GM12878 (cell line): ENCODE measurements at regions of chr1 and their contacts with region 1.

Region 1: DNA sequence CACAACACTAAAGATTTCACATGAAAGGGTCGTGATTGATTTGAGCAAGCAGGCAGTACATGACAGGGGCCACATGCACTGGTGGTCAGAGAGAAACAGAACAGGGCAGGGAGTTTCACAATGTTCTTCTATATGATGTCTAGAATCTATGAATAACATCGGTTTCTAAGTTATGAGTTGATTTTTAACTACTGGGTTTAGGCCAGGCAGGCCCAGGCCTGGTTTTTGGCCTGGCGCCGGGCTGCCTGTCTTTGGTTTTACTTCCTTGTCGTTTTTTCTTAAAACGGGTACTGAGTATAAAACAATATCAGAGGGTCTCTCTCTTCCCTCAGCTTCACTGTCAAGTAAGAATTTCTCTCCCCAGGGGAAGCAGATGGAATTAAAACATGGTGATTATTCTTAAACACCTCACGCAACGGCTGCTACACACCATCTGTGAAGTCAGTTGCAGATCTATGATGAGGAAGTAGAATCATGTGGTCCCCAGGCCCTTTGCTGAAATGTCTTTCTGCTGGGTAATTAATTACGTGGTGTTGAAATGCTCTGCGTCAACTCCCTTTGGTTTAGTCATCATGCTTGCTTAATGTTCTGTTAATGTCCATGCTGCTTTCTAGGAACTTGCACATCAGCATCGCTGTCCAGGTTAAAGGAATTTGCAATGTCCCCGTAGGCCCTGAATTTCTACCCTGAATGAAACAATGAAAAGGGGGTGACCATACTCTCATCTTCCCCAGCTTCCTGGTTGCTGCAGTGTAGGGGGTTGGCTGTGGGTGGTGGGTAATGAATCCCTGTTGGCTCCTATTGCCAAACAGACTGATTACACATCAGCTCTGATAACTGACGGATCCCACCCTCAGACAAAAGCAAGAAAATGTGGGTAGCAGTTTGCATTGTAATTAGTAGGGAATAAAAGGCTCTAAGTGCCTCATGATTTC is 70.3 kb downstream of the SERINC2 start:
- DNase-seq: peak; percentile 58
- ATAC-seq: peak; percentile 91
- H3K4me3 ChIP-seq: no peak overlapping the region
- H3K27ac ChIP-seq: peak overlapping the region; percentile 57
- H3K4me1 ChIP-seq: no peaks in the 10 kb centered on the region
- H3K27me3 ChIP-seq: no peaks in the 10 kb centered on the region
- CTCF ChIP-seq: no peak
- EP300 ChIP-seq: peak in 1 of 2 experiments; percentile 87; a peak in 3 of 4 replicates
- POLR2A ChIP-seq: no peak
- RAD21 ChIP-seq: no peak

Region 2: DNA sequence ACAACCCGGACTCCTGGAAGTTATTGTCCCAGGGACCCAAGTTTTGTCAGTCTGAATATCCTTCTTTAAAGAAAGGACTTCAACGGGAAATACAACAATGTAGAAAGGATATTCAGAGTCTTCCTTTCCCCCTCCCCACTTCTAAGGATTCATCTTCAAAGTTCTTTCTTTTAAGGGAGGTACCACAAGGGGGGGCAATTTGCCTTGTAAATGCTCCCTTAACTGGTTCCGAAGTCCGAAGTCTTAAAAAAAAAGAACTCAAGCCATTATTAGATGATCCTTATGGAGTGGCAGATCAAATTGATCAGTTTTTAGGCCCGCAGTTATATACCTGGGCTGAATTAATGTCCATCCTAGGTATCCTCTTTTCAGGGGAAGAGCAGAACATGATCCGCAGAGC is 23.3 kb before region 1 on chr1:
- CTCF ChIA-PET with region 1: no interaction called
- POLR2A ChIA-PET with region 1: no interaction called
- RAD21 ChIA-PET with region 1: interaction called, 28 read pairs
- SMC1A ChIA-PET with region 1: interaction called, 27 read pairs
- in situ Hi-C with region 1: no loop called
- intact Hi-C with region 1: no loop called
- DNase-seq: no peak
- ATAC-seq: no peak
- H3K4me3 ChIP-seq: no peak overlapping the region
- H3K27ac ChIP-seq: no peak overlapping the region
- H3K4me1 ChIP-seq: no peaks in the 10 kb centered on the region
- H3K27me3 ChIP-seq: no peaks in the 10 kb centered on the region
- CTCF ChIP-seq: peak in 1 of 3 experiments; percentile 7; a peak in 1 of 6 replicates
- EP300 ChIP-seq: no peak
- POLR2A ChIP-seq: no peak
- RAD21 ChIP-seq: no peak

Region 3: DNA sequence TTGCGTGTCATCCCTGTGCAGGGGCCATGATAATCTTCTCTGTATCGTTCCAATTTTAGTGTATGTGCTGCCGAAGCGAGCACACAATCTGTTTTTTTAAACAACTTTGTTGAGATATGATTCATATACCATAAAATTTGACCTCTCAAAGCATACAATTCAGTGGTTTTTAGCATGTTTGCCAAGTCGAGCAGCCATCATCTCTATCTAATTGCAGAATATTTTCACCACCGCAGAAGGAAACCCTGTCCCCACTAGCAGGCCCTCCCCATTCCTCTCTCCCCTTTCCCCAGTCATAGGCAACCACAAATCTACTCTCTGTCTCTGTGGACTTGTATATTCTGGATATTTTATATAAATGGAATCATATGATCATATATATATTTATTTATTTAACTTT is 14.3 kb after region 1 on chr1:
- CTCF ChIA-PET with region 1: interaction called, 12 read pairs
- POLR2A ChIA-PET with region 1: interaction called, 12 read pairs
- RAD21 ChIA-PET with region 1: interaction called, 3 read pairs
- SMC1A ChIA-PET with region 1: interaction called, 12 read pairs
- in situ Hi-C with region 1: no loop called
- intact Hi-C with region 1: no loop called
- DNase-seq: no peak
- ATAC-seq: no peak
- H3K4me3 ChIP-seq: no peak overlapping the region
- H3K27ac ChIP-seq: no peak overlapping the region
- H3K4me1 ChIP-seq: no peaks in the 10 kb centered on the region
- H3K27me3 ChIP-seq: no peaks in the 10 kb centered on the region
- CTCF ChIP-seq: no peak
- EP300 ChIP-seq: no peak
- POLR2A ChIP-seq: no peak
- RAD21 ChIP-seq: no peak

Region 4: DNA sequence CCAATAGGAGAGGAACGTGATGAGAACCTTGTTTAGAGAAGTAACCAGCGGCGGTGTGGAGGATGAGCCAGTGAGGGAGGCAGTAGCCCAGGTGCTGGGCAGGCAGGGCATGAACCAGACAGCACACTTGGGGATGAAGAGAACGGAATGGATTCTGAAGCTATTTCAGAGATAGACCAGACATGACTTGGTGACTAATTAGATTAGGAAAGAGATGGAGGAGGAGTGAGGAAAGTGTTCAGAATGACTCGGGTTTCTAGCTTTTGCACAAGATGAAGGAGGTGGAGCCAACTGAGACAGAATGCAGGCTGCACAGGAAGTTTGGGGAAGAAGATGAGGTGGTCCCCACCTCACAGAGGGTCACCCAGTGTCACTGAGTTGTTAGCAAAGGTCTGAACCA is 156.3 kb after region 1 on chr1:
- CTCF ChIA-PET with region 1: no interaction called
- POLR2A ChIA-PET with region 1: no interaction called
- RAD21 ChIA-PET with region 1: no interaction called
- SMC1A ChIA-PET with region 1: no interaction called
- in situ Hi-C with region 1: no loop called
- intact Hi-C with region 1: no loop called
- DNase-seq: no peak
- ATAC-seq: no peak
- H3K4me3 ChIP-seq: no peak overlapping the region
- H3K27ac ChIP-seq: no peak overlapping the region
- H3K4me1 ChIP-seq: peaks cover 9% of the 10 kb centered on the region
- H3K27me3 ChIP-seq: no peaks in the 10 kb centered on the region
- CTCF ChIP-seq: no peak
- EP300 ChIP-seq: no peak
- POLR2A ChIP-seq: no peak
- RAD21 ChIP-seq: no peak